CD4-positive, alpha-beta T cell (primary cell): ENCODE measurements at regions of chr17 and their contacts with region 1.

Region 1: GRCh38 chr17:59331129-59331928 is at the start of gene YPEL2:
- DNase-seq: peak; percentile 78 to 94 (median 88)
- ATAC-seq: peak; percentile 83
- H3K4me3 ChIP-seq: peak within 1 kb of the TSS; percentile 92
- H3K4me3 Mint-ChIP-seq: peak within 1 kb of the TSS; percentile 96
- H3K27ac ChIP-seq: peak within 1 kb of the TSS; percentile 35 to 49
- H3K27ac Mint-ChIP-seq: peak within 1 kb of the TSS; percentile 91
- H3K4me1 ChIP-seq: peaks cover 72% of the 10 kb centered on the region
- H3K4me1 Mint-ChIP-seq: peaks cover 83% of the 10 kb centered on the region
- H3K27me3 ChIP-seq: no peaks in the 10 kb centered on the region
- H3K27me3 Mint-ChIP-seq: no peaks in the 10 kb centered on the region
- CTCF ChIP-seq: no peak
- total RNA-seq, gene YPEL2: 69.1 to 71.6 TPM

Region 2: GRCh38 chr17:59220376-59221158 is 110.8 kb before region 1 on chr17 and contains the start of gene GDPD1:
- CTCF ChIA-PET with region 1: no interaction called
- POLR2A ChIA-PET with region 1: interaction called, 4 read pairs
- intact Hi-C with region 1: loop called in 1 of 2 experiments (anchors 2 kb)
- DNase-seq: peak; percentile 94 to 99 (median 97)
- ATAC-seq: peak; percentile 97
- H3K4me3 ChIP-seq: peak within 1 kb of the TSS; percentile 67
- H3K4me3 Mint-ChIP-seq: peak within 1 kb of the TSS; percentile 96
- H3K27ac ChIP-seq: peak within 1 kb of the TSS; percentile 66 to 87
- H3K27ac Mint-ChIP-seq: peak within 1 kb of the TSS; percentile 99
- H3K4me1 ChIP-seq: peaks cover 10% of the 10 kb centered on the region
- H3K4me1 Mint-ChIP-seq: peaks cover 16% of the 10 kb centered on the region
- H3K27me3 ChIP-seq: no peaks in the 10 kb centered on the region
- H3K27me3 Mint-ChIP-seq: no peaks in the 10 kb centered on the region
- CTCF ChIP-seq: peak; percentile 79
- total RNA-seq, gene GDPD1: 2.0 to 2.3 TPM

Region 3: DNA sequence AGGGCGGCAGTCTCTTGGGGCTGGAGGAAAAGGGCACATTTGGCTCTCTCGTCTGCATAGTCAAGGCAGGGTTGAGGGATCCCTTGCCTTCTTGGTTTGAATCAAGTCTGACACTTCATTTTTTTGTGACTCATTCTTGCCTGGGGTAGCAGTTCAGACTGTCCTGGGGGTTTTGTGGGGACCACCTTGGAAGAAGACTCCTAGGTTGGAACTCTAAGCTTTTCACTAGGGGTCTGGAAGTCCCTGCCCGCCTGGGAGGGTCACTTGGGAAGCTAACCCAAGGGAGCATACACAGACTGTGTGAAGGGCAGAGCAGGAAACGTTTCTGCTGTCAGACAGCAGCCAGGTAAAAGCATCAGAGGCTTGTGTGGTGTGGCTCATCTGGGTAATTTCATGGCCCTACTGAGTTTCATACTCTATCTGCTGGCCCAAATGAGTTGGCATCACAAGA is 11.4 kb after region 1 on chr17:
- CTCF ChIA-PET with region 1: interaction called, 3 read pairs
- POLR2A ChIA-PET with region 1: interaction called, 4 read pairs
- intact Hi-C with region 1: loop called in 1 of 2 experiments (anchors 1 kb)
- DNase-seq: peak in 1 of 14 experiments; percentile 26
- ATAC-seq: peak; percentile 48
- H3K4me3 ChIP-seq: no peak overlapping the region
- H3K4me3 Mint-ChIP-seq: peak overlapping the region; percentile 0
- H3K27ac ChIP-seq: no peak overlapping the region
- H3K27ac Mint-ChIP-seq: peak overlapping the region; percentile 35
- H3K4me1 ChIP-seq: peaks cover 31% of the 10 kb centered on the region
- H3K4me1 Mint-ChIP-seq: peaks cover 80% of the 10 kb centered on the region
- H3K27me3 ChIP-seq: no peaks in the 10 kb centered on the region
- H3K27me3 Mint-ChIP-seq: no peaks in the 10 kb centered on the region
- CTCF ChIP-seq: no peak

Region 4: DNA sequence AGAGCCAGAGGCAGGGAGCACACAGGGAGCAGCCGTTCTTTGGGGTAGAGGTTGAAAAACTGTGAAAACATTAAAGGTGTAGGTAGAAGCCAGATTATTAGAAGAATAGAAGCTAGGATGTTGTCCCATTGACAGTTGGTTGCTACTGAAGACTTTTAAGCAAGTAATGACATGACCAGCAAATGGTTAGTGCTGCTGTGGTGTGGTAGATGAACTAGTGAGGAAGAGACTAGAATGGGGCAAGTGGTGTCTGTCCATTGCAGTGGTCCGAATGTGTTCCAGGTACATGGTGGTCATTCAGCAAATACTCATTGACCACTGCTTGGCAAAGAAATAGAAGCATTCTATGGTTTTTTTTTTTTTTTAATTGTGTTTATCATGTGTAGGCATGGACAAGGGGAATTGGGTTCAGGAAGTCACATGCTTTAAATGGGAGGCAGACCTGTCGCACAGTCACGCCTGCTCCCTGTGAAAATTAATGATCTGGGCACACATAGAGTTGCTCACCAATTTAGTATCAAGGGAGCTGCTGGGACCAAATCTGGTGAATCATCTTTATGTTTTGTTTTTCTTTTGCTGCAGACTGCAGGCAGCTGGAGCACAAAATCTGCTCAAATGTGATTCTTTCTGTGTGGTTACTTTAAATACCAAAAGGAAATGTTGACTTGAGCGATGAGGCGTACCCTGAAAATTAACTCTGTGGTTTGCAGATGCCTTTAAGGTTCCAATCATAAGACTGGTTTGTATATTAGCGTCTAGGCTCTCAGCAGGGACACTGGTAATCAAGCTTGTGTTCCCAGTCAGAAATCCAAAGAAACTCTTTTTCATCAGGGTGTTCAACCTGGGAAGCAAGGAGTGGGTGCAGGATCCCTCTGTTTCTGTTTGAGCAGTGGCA is 30.8 kb after region 1 on chr17:
- CTCF ChIA-PET with region 1: interaction called, 13 read pairs
- POLR2A ChIA-PET with region 1: interaction called, 43 read pairs
- intact Hi-C with region 1: loop called (anchors 1 to 5 kb)
- DNase-seq: peak; percentile 12 to 68 (median 30)
- ATAC-seq: peak; percentile 69
- H3K4me3 ChIP-seq: peak overlapping the region; percentile 45
- H3K4me3 Mint-ChIP-seq: peak overlapping the region; percentile 69
- H3K27ac ChIP-seq: peak overlapping the region; percentile 64 to 65
- H3K27ac Mint-ChIP-seq: peak overlapping the region; percentile 89
- H3K4me1 ChIP-seq: peaks cover 86% of the 10 kb centered on the region
- H3K4me1 Mint-ChIP-seq: peaks cover 89% of the 10 kb centered on the region
- H3K27me3 ChIP-seq: no peaks in the 10 kb centered on the region
- H3K27me3 Mint-ChIP-seq: no peaks in the 10 kb centered on the region
- CTCF ChIP-seq: no peak

Region 5: GRCh38 chr17:59440784-59441441 is 109.6 kb after region 1 on chr17:
- CTCF ChIA-PET with region 1: interaction called, 28 read pairs
- POLR2A ChIA-PET with region 1: interaction called, 6 read pairs
- intact Hi-C with region 1: loop called in 1 of 2 experiments (anchors 1 kb)
- DNase-seq: peak; percentile 69 to 96 (median 84)
- ATAC-seq: peak; percentile 98
- H3K4me3 ChIP-seq: no peak overlapping the region
- H3K4me3 Mint-ChIP-seq: peak overlapping the region; percentile 9
- H3K27ac ChIP-seq: no peak overlapping the region
- H3K27ac Mint-ChIP-seq: peak overlapping the region; percentile 1
- H3K4me1 ChIP-seq: peaks cover 18% of the 10 kb centered on the region
- H3K4me1 Mint-ChIP-seq: peaks cover 19% of the 10 kb centered on the region
- H3K27me3 ChIP-seq: no peaks in the 10 kb centered on the region
- H3K27me3 Mint-ChIP-seq: no peaks in the 10 kb centered on the region
- CTCF ChIP-seq: peak; percentile 87

Region 6: DNA sequence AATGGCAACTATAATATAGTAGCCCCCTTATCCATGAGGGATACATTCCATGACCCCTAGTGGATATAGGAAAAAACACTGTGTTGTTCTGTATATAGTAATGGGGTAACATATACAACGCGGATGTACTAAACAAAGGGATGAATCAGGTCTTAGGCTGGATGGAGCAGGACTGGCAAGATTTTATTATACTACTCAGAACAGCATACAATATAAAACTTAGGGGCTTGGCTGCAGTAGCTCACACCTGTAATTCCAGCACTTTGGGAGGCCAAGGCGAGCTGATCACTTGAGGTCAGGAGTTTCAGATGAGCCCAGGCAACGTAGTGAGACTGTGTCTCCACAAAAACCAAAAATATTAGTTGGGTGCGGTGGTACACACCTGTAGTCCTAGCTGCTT is 402.9 kb after region 1 on chr17:
- CTCF ChIA-PET with region 1: no interaction called
- POLR2A ChIA-PET with region 1: no interaction called
- intact Hi-C with region 1: no loop called
- DNase-seq: no peak
- ATAC-seq: no peak
- H3K4me3 ChIP-seq: no peak overlapping the region
- H3K4me3 Mint-ChIP-seq: no peak overlapping the region
- H3K27ac ChIP-seq: no peak overlapping the region
- H3K27ac Mint-ChIP-seq: no peak overlapping the region
- H3K4me1 ChIP-seq: peaks cover 9% of the 10 kb centered on the region
- H3K4me1 Mint-ChIP-seq: peaks cover 4% of the 10 kb centered on the region
- H3K27me3 ChIP-seq: no peaks in the 10 kb centered on the region
- H3K27me3 Mint-ChIP-seq: no peaks in the 10 kb centered on the region
- CTCF ChIP-seq: no peak